ENCODE measurements at regions of chr4 and their contacts with region 1.

Region 1: GRCh38 chr4:184538023-184538599 is 63.8 kb upstream of the IRF2 start:
- DNase-seq: peak; percentile 80
- ATAC-seq: peak; percentile 79
- H3K4me3 ChIP-seq: peak overlapping the region; percentile 85
- H3K27ac ChIP-seq: peak overlapping the region; percentile 84
- H3K4me1 ChIP-seq: peaks cover 4% of the 10 kb centered on the region; the same call in 1 of the 2 replicates
- H3K27me3 ChIP-seq: no peaks in the 10 kb centered on the region
- CTCF ChIP-seq: peak; percentile 68

Region 2: DNA sequence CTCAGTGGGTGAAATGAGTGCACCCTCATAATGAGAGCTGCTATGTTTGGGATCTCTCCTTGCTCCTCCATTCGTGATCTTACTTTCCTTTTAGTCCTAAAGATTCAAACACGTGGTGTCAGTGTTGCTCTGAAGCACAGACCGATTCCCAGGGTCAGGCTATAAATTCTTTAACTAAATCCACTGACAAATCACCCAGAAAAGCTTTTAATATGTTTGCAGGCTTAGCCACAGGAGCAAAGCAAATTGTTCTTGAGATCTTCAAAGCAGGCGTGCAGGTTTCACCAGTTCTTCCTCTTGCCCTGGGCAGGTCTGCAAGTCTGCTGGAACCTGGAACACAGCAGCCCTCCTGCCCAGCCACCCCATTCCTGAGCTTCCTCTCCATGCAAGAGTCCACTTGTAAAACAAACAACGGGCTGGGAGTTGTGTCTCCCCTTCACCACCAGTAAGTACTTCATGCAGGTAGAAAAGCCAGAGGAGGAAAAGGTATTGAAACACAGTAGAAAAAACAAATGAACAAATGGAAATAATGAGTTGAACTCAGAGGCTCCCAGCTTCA is 250.3 kb before region 1 on chr4:
- CTCF ChIA-PET with region 1: no interaction called
- POLR2A ChIA-PET with region 1: no interaction called
- intact Hi-C with region 1: loop called (anchors 1 kb)
- DNase-seq: peak; percentile 73
- ATAC-seq: peak; percentile 53
- H3K4me3 ChIP-seq: peak overlapping the region; percentile 32; the same call in 1 of the 2 replicates
- H3K27ac ChIP-seq: peak overlapping the region; percentile 40
- H3K4me1 ChIP-seq: peaks cover 13% of the 10 kb centered on the region
- H3K27me3 ChIP-seq: no peaks in the 10 kb centered on the region
- CTCF ChIP-seq: peak; percentile 58

Region 3: GRCh38 chr4:184612074-184612473 is 74.0 kb after region 1 on chr4:
- CTCF ChIA-PET with region 1: no interaction called
- POLR2A ChIA-PET with region 1: no interaction called
- intact Hi-C with region 1: no loop called
- DNase-seq: no peak
- ATAC-seq: no peak
- H3K4me3 ChIP-seq: no peak overlapping the region
- H3K27ac ChIP-seq: no peak overlapping the region
- H3K4me1 ChIP-seq: no peaks in the 10 kb centered on the region
- H3K27me3 ChIP-seq: no peaks in the 10 kb centered on the region
- CTCF ChIP-seq: no peak

Measured in PC-3 (cell line).